Pancreas (tissue), 10 donors: ENCODE measurements at regions of chr10 and their contacts with region 1.

Region 1: DNA sequence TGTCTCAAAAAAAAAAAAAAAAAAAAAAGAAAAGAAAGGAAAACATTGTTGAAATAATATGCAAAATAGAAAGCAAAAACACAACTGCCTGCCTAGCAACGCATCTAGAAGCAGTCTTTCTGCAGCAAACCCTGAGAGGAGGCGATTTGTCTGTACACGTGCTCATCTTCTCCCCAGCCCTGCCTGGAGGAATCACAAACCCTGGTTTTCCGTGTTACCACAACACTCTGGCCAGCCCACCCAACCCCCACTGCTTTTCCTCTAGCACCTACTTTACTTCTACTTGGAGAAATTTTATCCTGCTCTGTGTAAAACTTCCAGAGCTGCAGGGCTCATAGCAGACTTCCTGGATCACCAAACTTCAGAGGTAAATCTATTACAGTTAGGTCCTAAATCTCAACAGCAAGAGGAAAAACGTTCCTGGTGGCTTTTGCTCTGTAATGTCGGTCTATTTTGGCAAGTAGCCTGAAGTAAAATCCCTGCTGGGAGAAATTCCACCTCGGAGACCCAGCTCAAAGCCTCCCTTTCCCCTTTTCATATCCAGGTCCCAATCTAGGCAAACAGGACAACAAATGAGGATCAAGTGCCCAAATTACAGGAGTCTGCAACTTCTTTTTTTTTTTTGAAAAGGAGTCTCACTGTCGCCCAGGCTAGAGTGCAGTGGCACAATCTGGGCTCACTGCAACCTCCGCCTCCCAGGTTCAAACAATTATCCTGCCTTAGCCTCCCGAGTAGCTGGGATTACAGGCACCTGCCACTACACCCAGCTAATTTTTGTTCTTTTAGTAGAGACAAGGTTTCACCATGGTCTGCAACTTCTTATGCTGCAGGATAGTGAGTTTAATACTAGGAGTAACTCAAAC is 91.6 kb downstream of the DNMBP start:
- DNase-seq: peak in 1 of 6 donors; percentile 25
- ATAC-seq: peak; percentile 9 to 43 (median 36)
- H3K4me3 ChIP-seq: peak overlapping the region in 2 of 4 donors; percentile 9 to 26
- H3K27ac ChIP-seq: peak overlapping the region; percentile 8 to 73 (median 68)
- H3K4me1 ChIP-seq: peaks cover 24 to 40% (median 37%) of the 10 kb centered on the region in 3 donors
- H3K27me3 ChIP-seq: no peaks in the 10 kb centered on the region
- CTCF ChIP-seq: no peak

Region 2: GRCh38 chr10:100009793-100010676 is 91.8 kb after region 1 on chr10 and contains the start of gene DNMBP:
- intact Hi-C with region 1: loop called in 1 of 3 experiments (anchors 10 kb)
- DNase-seq: peak; percentile 78 to 92 (median 85)
- ATAC-seq: peak; percentile 90 to 97 (median 94)
- H3K4me3 ChIP-seq: peak within 1 kb of the TSS; percentile 49 to 71 (median 60)
- H3K27ac ChIP-seq: peak within 1 kb of the TSS in 3 of 4 donors; percentile 39 to 59 (median 58)
- H3K4me1 ChIP-seq: peaks cover 6 to 16% (median 7%) of the 10 kb centered on the region in 3 donors
- H3K27me3 ChIP-seq: no peaks in the 10 kb centered on the region
- CTCF ChIP-seq: peak; percentile 16 to 37 (median 32)
- total RNA-seq, gene DNMBP: 9.1 to 17.9 (median 12.5) TPM

Region 3: GRCh38 chr10:100192350-100192749 is 274.2 kb after region 1 on chr10:
- intact Hi-C with region 1: no loop called
- DNase-seq: no peak
- ATAC-seq: peak in 1 of 4 donors; percentile 38
- H3K4me3 ChIP-seq: no peak overlapping the region
- H3K27ac ChIP-seq: no peak overlapping the region
- H3K4me1 ChIP-seq: peaks cover 0 to 19% (median 5%) of the 10 kb centered on the region in 3 donors
- H3K27me3 ChIP-seq: no peaks in the 10 kb centered on the region
- CTCF ChIP-seq: no peak